HEK293T (cell line): ENCODE measurements at regions of chr1 and their contacts with region 1.

Region 1: DNA sequence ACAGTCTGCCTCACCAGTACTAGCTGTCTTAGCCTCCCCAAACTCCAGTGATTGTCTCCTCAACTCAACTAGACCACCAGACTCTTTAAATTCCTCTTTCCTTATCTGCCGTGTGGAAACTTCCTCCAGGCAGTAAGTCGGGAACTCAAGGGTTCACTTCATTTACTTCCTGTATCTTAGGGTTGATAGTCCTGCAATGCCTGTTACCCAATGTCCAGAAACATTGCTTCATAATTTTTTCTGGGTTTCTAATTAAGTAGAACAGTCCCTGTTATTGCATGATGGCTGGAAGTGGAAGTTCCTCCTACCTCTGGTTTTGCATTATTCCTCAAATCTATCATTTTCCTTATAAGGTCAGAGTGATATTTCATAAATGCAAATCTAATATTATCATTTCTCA is 60.8 kb upstream of the RNF11 start:
- DNase-seq: no peak

Region 2: GRCh38 chr1:51131185-51131584 is 44.1 kb before region 1 on chr1:
- CTCF ChIA-PET with region 1: no interaction called
- POLR2A ChIA-PET with region 1: no interaction called
- DNase-seq: no peak

Region 3: DNA sequence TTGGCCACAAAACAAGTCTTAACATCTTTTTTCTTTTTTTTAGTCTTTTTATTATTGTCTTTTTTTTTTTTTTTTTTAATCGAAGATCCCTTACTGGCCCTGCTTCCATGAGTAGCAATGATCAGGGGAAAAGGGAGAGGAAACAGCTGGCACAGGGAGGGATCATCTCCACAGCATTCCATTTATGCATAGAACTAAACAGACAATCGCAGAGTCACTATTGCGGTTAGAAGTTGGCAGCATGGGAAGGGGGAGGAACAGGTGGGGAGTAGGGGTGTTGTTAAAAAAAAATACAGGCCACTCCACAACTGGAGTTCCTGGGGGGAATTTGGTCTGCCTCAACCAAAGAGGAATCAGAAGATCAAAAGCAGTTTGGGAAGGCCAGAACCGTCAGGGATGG is 17.9 kb before region 1 on chr1:
- CTCF ChIA-PET with region 1: no interaction called
- POLR2A ChIA-PET with region 1: no interaction called
- DNase-seq: no peak

Region 4: DNA sequence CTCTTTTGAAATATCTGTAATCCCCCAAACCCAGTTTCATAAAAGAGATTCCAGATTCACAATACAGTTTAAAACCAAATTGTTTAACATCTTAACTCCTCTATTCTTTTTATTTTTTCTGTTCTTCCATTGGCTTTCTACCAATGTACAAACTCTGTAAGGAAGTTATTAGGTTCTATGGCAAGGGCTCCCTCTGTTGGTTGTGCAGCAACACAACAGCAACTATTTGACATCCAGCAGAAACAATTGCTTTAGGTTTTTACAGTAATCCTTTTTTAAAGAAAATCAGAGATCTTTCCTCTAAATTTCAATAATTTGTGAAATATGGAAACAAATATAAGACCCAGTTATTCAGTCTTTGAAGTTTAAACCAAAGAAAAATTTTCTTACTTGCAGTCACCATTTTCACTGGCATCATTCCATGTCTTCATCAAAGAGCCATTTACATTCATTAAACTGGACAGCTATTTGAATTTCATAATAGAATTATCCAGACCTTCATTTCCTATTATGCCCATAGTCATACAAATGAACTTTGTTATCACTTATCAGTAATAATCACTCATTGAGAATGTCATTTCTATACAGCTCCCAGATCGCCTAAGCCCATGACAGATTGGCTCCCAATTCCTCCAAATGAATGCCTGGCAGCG is 14.3 kb after region 1 on chr1:
- CTCF ChIA-PET with region 1: interaction called, 12 read pairs
- POLR2A ChIA-PET with region 1: no interaction called
- DNase-seq: peak; percentile 66

Region 5: GRCh38 chr1:51296383-51297357 is 121.4 kb after region 1 on chr1:
- CTCF ChIA-PET with region 1: no interaction called
- POLR2A ChIA-PET with region 1: no interaction called
- DNase-seq: peak; percentile 87